PC-3 (cell line): ENCODE measurements at regions of chr4 and their contacts with region 1.

Region 1: GRCh38 chr4:163048447-163048846 is 118.2 kb downstream of the NAF1 start:
- DNase-seq: peak; percentile 51
- ATAC-seq: peak; percentile 73
- H3K4me3 ChIP-seq: no peak overlapping the region
- H3K27ac ChIP-seq: no peak overlapping the region
- H3K4me1 ChIP-seq: no peaks in the 10 kb centered on the region
- H3K27me3 ChIP-seq: no peaks in the 10 kb centered on the region
- CTCF ChIP-seq: peak; percentile 64

Region 2: DNA sequence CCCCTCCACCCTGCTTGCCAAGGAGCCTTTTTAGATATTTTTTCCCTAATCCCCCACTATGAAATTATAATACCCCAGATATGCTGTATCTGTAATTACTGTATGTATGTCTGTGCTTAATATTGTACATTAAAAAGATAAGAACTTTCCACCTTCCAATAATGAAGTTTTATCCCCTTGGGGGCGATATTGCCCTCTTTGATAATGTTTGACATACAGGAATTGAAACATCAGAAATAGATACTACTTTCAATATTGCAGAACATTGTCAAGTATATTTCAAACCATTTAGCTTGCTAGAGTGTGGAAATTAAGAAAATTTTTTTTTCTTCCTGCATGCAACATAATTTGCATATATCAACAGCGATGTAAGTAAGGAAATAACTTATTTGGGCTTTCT is 59.3 kb after region 1 on chr4:
- CTCF ChIA-PET with region 1: no interaction called
- POLR2A ChIA-PET with region 1: no interaction called
- intact Hi-C with region 1: loop called (anchors 5 kb)
- DNase-seq: peak; percentile 30
- ATAC-seq: no peak
- H3K4me3 ChIP-seq: no peak overlapping the region
- H3K27ac ChIP-seq: no peak overlapping the region
- H3K4me1 ChIP-seq: no peaks in the 10 kb centered on the region
- H3K27me3 ChIP-seq: no peaks in the 10 kb centered on the region
- CTCF ChIP-seq: peak; percentile 48

Region 3: DNA sequence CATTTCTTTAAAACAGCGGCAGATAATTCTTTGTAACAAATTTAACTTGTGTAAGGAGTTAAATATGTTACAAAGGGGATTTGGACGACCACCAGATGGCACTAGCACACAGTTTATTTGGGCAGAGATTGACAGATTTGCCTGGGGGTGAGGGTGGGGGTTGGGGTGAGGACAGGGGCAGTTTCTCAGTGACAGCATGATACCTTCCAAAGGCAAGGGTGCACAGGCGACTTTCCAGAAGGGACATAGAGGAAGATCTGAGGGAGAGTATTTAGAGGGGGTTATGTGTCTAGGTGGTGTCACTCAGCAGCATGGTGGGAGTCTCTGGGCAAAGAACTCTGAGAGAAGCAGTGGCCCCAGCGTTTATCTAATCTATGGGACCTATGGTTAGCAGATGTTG is 436.5 kb after region 1 on chr4:
- CTCF ChIA-PET with region 1: no interaction called
- POLR2A ChIA-PET with region 1: no interaction called
- intact Hi-C with region 1: loop called (anchors 10 kb)
- DNase-seq: peak; percentile 69
- ATAC-seq: no peak
- H3K4me3 ChIP-seq: no peak overlapping the region
- H3K27ac ChIP-seq: no peak overlapping the region
- H3K4me1 ChIP-seq: no peaks in the 10 kb centered on the region
- H3K27me3 ChIP-seq: no peaks in the 10 kb centered on the region
- CTCF ChIP-seq: peak; percentile 72